Heart right ventricle (tissue), 16 donors: ENCODE measurements at regions of chr3 and their contacts with region 1.

Region 1: GRCh38 chr3:49673715-49674496 is at the start of gene APEH:
- DNase-seq: peak; percentile 94
- ATAC-seq: peak; percentile 92 to 97 (median 95)
- H3K4me3 ChIP-seq: peak within 1 kb of the TSS; percentile 61 to 99 (median 84)
- H3K27ac ChIP-seq: peak within 1 kb of the TSS; percentile 77 to 97 (median 92)
- H3K4me1 ChIP-seq: peaks cover 0 to 21% (median 17%) of the 10 kb centered on the region in 9 donors
- H3K27me3 ChIP-seq: no peaks in the 10 kb centered on the region
- CTCF ChIP-seq: peak in 1 of 9 donors; percentile 6
- total RNA-seq, gene APEH: 101 to 140 (median 110) TPM

Region 2: DNA sequence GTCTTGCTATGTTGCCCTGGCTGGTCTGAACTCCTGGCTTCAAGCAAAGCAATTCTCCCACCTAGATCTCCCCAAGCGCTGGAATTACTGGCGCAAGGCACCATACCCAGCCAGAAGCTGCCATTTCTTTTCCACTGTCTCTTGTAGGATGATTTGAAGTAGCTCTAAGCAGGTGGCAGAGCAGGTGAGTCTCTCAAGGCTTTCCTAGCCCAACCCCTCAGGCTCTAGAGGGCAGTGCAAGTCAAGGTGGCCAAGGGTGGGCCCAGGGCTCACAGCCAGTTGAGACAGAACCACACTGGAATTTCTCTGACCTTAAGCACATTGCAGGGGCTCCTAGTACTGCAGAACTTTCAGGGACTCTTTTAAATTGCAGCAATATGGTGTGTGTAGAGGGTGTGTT is 219.4 kb before region 1 on chr3:
- intact Hi-C with region 1: loop called in 1 of 10 experiments (anchors 5 kb)
- DNase-seq: no peak
- ATAC-seq: peak in 6 of 8 donors; percentile 34 to 75 (median 65)
- H3K4me3 ChIP-seq: no peak overlapping the region
- H3K27ac ChIP-seq: peak overlapping the region in 8 of 10 donors; percentile 7 to 76 (median 54)
- H3K4me1 ChIP-seq: peaks cover 9 to 38% (median 19%) of the 10 kb centered on the region in 9 donors
- H3K27me3 ChIP-seq: no peaks in the 10 kb centered on the region
- CTCF ChIP-seq: peak in 8 of 9 donors; percentile 19 to 57 (median 38)

Region 3: DNA sequence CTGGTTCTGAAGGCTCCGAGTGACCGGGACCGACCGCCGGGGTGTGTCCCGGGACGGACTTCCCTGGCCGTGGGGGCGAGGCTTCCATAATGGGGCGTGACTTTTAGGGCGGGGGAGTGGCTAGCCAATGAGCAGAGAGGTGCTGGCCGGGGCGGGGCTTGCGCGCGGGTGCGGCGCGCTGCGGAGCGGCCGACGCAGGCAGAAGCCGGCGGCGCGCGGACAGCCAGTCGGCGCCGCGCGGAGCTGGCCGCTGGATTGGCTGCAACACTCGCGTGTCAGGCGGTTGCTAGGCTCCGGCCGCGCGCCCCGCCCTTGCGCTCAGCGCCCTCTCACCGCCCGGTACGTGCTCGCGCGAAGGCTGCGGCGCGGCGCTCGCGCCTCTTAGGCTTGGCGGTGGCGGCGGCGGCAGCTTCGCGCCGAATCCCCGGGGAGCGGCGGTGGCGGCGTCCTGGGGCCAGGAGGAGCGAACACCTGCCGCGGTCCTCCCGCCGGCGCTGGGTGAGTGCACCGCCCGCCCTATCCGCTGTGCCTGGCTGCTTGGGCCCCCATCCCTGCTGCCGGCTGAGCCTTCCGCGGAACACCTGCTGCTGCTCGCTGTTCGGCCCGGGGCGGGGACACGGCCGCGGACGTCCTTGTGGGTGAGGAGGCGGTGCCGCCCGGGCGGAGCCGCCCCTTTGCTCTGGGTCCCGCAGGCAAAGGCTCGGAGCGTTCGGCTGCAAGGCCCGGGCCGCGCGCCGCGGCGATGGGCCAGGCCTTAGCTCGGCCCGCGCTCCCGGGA is 203.8 kb before region 1 on chr3 and contains the start of gene DAG1:
- intact Hi-C with region 1: loop called in 2 of 10 experiments (anchors 5 to 10 kb)
- DNase-seq: peak; percentile 98 to 99
- ATAC-seq: peak; percentile 88 to 95 (median 92)
- H3K4me3 ChIP-seq: peak within 1 kb of the TSS; percentile 39 to 94 (median 80)
- H3K27ac ChIP-seq: peak within 1 kb of the TSS; percentile 86 to 100 (median 98)
- H3K4me1 ChIP-seq: peaks cover 14 to 49% (median 43%) of the 10 kb centered on the region in 9 donors
- H3K27me3 ChIP-seq: no peaks in the 10 kb centered on the region
- CTCF ChIP-seq: no peak
- total RNA-seq, gene DAG1: 118 to 173 (median 139) TPM

Region 4: GRCh38 chr3:49519296-49519695 is 154.6 kb before region 1 on chr3:
- intact Hi-C with region 1: no loop called
- DNase-seq: peak in 1 of 2 donors; percentile 21
- ATAC-seq: peak in 1 of 8 donors; percentile 8
- H3K4me3 ChIP-seq: no peak overlapping the region
- H3K27ac ChIP-seq: peak overlapping the region in 1 of 10 donors; percentile 21
- H3K4me1 ChIP-seq: peaks cover 2 to 43% (median 31%) of the 10 kb centered on the region in 9 donors
- H3K27me3 ChIP-seq: no peaks in the 10 kb centered on the region
- CTCF ChIP-seq: no peak

Region 5: DNA sequence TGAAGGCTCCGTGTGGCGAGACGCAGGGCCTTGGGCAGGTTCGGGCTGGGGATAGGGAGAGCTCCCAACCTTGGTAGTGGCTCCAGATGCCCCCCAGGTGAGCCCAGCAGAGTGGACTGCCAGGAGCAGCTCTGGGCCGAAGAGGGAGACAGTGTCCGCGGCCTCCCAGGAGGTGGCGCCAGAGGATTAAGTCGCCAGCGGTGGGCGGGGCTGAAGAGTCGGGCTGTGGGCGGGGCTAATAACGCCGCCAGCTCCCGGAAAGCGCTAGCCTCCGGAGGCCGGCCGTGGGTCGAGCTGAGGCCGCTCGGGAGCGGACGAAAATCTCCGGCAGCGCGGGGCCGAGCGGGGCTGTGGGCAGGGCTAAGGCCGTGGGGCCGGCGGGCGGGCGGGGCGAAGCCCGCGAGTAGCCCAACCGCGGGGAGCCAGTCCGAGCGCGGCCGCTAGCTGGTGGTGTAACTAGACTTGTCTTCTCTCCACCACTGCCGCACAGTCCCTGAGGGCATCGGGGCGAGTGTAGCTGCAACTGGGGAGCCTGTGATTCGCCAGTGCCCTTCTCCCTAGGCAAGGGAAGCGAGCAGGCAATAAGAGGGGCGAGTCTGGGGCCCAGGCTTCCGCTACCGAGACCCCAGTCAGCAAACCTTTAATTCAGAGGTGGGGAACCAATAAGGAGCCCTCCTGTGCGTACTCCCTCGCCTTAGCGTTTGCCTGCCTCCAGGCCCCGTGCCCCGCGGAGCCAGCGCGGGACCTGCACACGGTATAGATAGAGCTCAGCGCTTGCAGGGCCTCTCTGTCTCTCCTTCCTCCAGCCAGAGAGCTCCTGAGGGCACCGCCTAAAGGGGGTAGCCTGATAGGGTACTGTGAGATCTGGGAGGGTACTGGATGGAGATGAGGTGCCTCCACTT is 134.0 kb before region 1 on chr3:
- intact Hi-C with region 1: loop called (anchors 1 to 5 kb)
- DNase-seq: peak; percentile 92 to 96
- ATAC-seq: peak; percentile 97 to 99 (median 98)
- H3K4me3 ChIP-seq: peak overlapping the region in 9 of 10 donors; percentile 44 to 78 (median 58)
- H3K27ac ChIP-seq: peak overlapping the region in 9 of 10 donors; percentile 72 to 89 (median 82)
- H3K4me1 ChIP-seq: peaks cover 0 to 15% (median 6%) of the 10 kb centered on the region in 9 donors
- H3K27me3 ChIP-seq: peaks cover 0 to 3% (median 0%) of the 10 kb centered on the region in 7 donors
- CTCF ChIP-seq: peak; percentile 85 to 94 (median 91)